ENCODE measurements at regions of chr3 and their contacts with region 1.

Region 1: DNA sequence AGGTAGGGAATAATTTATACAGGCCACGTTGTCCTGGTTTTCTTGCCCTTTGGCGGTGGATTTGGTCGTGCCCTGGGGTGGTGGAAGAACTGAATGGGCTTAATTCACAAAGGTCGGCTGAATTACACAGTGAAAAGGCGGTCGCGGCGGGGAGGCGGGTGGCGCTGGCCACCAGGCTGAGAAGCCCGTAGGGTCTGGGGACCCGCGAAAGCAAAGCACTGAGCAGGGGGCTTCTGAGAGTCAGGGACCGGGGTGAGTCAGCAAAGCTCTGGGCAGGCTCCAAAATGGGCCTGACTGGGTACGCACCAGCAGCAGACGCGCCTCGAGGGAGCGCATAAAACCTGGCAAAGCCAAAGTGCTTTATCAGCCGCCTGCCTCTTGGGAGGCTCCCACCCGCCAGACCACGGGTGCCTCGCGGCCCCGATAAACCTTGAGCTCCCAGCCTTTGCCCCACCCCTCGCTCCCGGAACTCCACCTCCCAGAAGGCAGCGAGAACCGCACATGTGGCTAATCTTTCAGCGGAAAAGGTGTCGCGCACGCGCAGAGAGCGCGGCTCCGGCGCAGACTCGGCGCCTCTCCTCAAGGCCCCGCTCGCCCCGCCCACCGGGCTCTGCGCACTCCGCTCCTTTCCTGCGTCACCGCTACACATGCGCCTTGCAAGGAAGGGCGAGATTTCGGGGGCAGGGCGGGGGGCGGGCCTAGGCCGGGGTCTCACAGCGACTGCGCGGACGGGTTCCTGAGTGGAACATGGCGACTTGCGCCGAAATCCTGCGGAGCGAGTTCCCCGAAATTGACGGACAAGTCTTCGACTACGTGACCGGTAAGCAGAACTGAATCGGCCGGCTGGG is at the start of gene ABCF3:
- DNase-seq: peak; percentile 98 to 100
- H3K4me3 ChIP-seq: peak within 1 kb of the TSS; percentile 91 to 97
- H3K27ac ChIP-seq: peak within 1 kb of the TSS; percentile 87 to 93
- H3K4me1 ChIP-seq: peaks cover 0 to 16% of the 10 kb centered on the region in 2 donors
- H3K27me3 ChIP-seq: no peaks in the 10 kb centered on the region
- CTCF ChIP-seq: no peak
- total RNA-seq, gene ABCF3: 93.3 TPM

Region 2: DNA sequence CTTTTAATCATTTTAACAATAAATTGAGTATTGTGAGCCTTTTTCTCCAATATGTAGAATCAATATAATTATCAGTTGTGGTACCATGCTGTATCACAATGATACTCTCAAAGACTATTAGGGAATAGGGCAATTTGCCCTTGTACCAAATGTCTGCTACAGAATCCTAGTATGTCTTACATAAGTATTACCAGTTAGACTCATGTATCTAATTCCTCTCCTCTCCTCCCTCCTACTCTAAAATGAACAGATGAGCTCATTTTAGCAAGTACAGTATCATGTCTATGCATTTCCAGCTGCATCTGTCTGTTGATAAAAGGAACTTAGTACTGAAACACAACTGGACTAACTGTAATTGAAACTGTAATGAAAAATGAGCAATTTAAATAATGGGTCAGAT is 1516.7 kb before region 1 on chr3:
- intact Hi-C with region 1: no loop called
- DNase-seq: no peak
- H3K4me3 ChIP-seq: no peak overlapping the region
- H3K27ac ChIP-seq: no peak overlapping the region
- H3K4me1 ChIP-seq: no peaks in the 10 kb centered on the region
- H3K27me3 ChIP-seq: no peaks in the 10 kb centered on the region
- CTCF ChIP-seq: no peak

Region 3: DNA sequence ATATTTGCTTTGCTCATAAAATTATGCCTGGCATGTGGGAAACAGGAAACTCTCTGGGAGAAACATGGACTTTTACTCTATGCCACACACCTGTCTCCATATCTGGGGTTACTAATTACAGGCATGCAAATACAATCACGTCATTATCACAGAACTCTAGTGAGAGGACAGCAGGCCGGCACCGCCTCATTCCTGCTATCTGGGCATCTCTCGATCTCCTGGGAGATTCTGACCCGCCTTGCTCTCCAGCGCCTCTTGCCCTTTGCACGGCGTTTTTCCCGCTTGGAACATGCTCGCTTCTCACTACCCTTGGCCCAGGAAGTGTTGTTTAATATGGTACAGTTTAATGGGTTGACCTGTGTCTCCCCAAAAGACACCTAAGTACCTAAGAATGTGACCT is 255.6 kb before region 1 on chr3:
- intact Hi-C with region 1: no loop called
- DNase-seq: no peak
- H3K4me3 ChIP-seq: no peak overlapping the region
- H3K27ac ChIP-seq: no peak overlapping the region
- H3K4me1 ChIP-seq: no peaks in the 10 kb centered on the region
- H3K27me3 ChIP-seq: no peaks in the 10 kb centered on the region
- CTCF ChIP-seq: no peak

Region 4: DNA sequence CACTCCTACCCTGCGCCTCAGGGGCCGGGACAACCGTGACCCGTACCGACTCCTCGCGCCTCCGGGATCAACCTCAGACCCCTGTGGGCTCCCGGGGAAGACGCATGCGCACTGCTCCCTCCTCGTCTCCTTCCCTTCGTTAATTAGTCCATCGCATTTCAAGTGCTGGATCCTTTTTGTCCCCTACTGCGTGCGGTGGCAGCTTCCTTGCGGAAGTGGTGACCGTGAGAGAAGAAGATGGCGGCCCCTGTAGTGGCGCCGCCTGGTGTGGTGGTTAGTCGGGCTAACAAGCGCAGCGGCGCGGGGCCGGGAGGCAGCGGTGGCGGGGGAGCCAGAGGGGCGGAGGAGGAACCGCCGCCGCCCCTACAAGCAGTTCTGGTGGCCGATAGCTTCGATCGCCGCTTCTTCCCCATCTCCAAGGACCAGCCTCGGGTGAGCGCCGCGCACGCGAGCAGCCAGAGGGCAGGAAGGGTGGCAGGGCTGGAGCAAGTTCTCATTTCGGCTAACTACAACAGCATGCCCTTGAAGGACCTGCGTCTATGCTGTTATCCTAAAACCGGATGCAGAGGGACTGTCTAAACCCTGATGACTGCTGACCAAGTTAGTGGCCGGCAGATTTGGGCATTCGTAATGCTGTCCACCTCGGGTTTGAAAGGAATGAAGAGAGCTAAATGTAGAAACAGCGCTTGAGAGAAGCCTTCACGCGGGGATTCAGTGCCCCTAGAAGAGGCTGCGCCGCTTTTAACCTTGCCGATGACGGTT is 50.4 kb before region 1 on chr3 and contains the start of gene EIF2B5:
- intact Hi-C with region 1: loop called (anchors 2 kb)
- DNase-seq: peak; percentile 71 to 96
- H3K4me3 ChIP-seq: peak within 1 kb of the TSS; percentile 74 to 91
- H3K27ac ChIP-seq: peak within 1 kb of the TSS; percentile 90 to 91
- H3K4me1 ChIP-seq: peaks cover 3 to 9% of the 10 kb centered on the region in 2 donors
- H3K27me3 ChIP-seq: no peaks in the 10 kb centered on the region
- CTCF ChIP-seq: peak in 2 of 3 experiments; percentile 44 to 51
- total RNA-seq, gene EIF2B5: 24.7 TPM

Region 5: DNA sequence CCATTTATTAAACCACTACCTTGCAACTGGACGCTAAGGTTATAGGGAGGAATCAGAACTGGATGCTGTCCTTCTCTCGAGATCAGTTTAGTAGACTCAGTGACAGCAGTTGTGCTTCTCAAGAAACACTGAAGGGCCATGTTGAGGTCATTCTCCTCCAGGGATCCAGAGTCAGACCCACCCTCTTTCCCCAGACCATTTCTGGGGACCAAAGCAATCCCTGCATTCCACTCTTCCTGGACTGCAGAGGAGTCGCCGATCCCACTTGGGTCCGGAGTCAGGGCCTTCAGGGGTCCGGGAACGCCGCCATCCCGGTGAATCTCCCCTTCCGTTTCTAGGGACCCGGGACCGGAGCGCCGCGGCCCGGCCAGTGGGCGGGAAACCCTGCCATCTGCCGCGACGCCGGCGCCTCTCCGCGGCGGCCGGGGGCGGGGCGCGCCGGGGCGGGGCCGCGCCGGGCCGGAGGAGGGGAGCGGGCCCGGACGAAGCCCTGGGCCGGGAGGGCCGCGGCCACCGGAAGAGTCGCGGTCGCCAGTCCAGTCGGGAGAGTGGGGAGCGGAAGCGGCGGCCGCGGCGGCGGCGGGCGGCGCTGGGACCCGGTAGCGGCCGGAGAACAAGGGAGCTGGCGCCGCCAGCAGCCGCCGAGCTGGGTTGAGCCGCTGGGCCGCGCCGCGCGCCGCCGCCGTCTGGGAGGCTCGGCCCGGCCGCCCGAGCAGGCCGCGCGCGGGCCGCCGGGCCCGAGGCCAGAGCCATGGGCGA is 30.6 kb before region 1 on chr3 and contains the start of gene DVL3:
- intact Hi-C with region 1: loop called (anchors 1 kb)
- DNase-seq: peak in 1 of 2 donors; percentile 81
- H3K4me3 ChIP-seq: peak within 1 kb of the TSS; percentile 80 to 97
- H3K27ac ChIP-seq: peak within 1 kb of the TSS; percentile 87 to 89
- H3K4me1 ChIP-seq: peaks cover 9 to 21% of the 10 kb centered on the region in 2 donors
- H3K27me3 ChIP-seq: no peaks in the 10 kb centered on the region
- CTCF ChIP-seq: no peak
- total RNA-seq, gene DVL3: 36.6 TPM

Region 6: DNA sequence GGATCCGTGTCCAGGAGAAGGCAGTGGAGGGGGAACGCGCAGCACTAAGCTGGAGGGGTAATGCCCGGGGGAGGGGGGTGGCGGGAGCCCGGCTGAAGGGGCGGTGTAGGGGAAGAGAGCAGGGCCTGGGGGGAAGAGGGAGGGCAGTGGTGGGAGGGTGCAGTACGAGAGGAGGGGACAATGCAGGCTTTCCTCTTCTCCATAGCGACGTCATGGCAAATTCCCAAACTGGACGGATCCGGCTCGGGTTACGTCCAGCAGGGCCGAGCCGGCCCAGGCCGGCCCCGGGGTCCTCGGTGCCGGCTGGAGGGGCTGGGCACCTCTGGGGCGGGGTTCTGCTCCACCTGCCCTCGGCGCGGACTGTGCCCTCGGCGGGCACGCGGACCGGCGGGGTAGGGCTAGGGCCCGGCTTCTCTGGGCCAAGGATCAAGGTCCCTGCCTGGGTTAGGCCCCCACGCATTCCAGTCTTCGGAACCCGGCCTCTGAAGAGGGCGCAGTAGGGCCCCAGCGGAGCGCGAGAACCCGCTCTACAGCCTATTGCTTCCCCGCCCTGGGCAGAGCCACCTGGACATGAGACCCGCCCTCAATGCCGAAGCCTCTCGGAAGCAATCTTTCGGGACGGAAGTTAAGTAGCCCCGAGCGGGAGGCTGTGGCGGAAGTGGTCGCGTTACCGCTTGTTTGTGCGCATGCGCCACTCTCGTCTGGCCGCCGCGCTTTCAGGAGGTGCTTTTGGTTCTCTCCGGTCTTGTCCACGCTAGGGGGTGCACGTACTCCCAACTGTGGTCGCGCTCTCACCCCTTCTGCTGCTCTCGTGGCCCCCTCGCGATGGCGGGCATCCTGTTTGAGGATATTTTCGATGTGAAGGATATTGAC is 177.2 kb after region 1 on chr3:
- intact Hi-C with region 1: loop called (anchors 5 kb)
- DNase-seq: peak; percentile 79 to 98
- H3K4me3 ChIP-seq: peak overlapping the region; percentile 64 to 78
- H3K27ac ChIP-seq: peak overlapping the region; percentile 99 to 100
- H3K4me1 ChIP-seq: peaks cover 5 to 15% of the 10 kb centered on the region in 2 donors
- H3K27me3 ChIP-seq: no peaks in the 10 kb centered on the region
- CTCF ChIP-seq: peak in 2 of 3 experiments; percentile 56 to 68